ENCODE measurements at regions of chr4 and their contacts with region 1.

Region 1: GRCh38 chr4:127732613-127733328 is 2.6 kb downstream of the SLC25A31 start:
- DNase-seq: peak; percentile 15
- H3K4me3 ChIP-seq: peak overlapping the region; percentile 11; the same call in 1 of the 2 replicates
- H3K27ac ChIP-seq: no peak overlapping the region
- H3K27me3 ChIP-seq: no peaks in the 10 kb centered on the region
- CTCF ChIP-seq: peak; percentile 63

Region 2: GRCh38 chr4:127400276-127400675 is 332.5 kb before region 1 on chr4:
- CTCF ChIA-PET with region 1: no interaction called
- POLR2A ChIA-PET with region 1: no interaction called
- DNase-seq: no peak
- H3K4me3 ChIP-seq: no peak overlapping the region
- H3K27ac ChIP-seq: no peak overlapping the region
- H3K27me3 ChIP-seq: no peaks in the 10 kb centered on the region
- CTCF ChIP-seq: no peak

Region 3: GRCh38 chr4:127586922-127587571 is 145.7 kb before region 1 on chr4:
- CTCF ChIA-PET with region 1: interaction called, 18 read pairs
- POLR2A ChIA-PET with region 1: no interaction called
- DNase-seq: no peak
- H3K4me3 ChIP-seq: no peak overlapping the region
- H3K27ac ChIP-seq: no peak overlapping the region
- H3K27me3 ChIP-seq: no peaks in the 10 kb centered on the region
- CTCF ChIP-seq: peak; percentile 84

Region 4: GRCh38 chr4:127616898-127617297 is 115.9 kb before region 1 on chr4:
- CTCF ChIA-PET with region 1: interaction called, 39 read pairs
- POLR2A ChIA-PET with region 1: no interaction called
- DNase-seq: no peak
- H3K4me3 ChIP-seq: no peak overlapping the region
- H3K27ac ChIP-seq: no peak overlapping the region
- H3K27me3 ChIP-seq: peaks cover 8% of the 10 kb centered on the region
- CTCF ChIP-seq: no peak

Region 5: DNA sequence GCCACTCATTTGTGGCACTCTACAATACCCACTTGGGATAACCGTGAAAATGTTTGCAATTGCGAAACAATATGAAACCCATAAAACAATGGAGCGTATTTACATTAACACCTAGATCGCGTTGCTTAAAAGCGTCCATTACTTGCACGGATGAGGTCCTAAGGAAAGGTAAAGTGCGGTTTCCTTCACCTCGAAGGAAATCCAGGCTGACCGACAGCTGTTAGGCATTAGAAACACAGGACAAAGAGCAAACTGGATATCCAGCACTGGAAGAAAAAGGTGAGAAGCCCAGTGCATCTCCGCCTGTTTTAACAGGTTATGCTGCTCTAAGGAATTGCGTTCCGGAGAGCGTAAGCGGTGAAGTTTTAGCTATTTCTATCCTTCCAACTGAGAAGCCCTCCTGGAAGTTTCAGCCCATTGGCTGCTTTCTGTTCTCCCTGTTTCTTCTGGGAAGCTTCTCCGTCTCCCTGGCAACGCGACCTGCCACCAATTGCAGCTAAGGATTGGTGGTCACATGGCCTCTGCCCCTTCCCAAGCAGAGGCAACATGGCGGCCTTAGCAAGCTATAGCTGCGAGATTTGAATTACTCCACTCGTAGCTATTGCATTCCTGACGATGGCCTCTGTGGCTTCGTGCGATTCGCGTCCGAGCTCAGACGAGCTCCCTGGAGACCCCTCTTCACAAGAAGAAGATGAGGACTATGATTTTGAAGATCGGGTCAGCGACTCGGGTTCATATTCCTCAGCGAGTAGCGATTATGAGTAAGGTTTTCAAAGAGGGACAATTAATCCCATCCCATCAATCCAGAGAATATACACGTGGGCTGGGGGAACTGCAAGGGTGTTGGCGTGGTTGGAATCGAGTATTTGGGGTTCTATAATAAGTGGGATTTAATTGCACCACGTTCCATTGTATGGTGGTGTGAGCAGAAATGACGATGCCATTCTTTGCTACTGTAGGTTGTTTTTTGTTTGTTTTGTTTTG is 100.1 kb before region 1 on chr4 and contains the start of gene INTU:
- CTCF ChIA-PET with region 1: interaction called, 13 read pairs
- POLR2A ChIA-PET with region 1: interaction called, 3 read pairs
- DNase-seq: peak; percentile 92
- H3K4me3 ChIP-seq: peak within 1 kb of the TSS; percentile 78
- H3K27ac ChIP-seq: peak within 1 kb of the TSS; percentile 71
- H3K27me3 ChIP-seq: no peaks in the 10 kb centered on the region
- CTCF ChIP-seq: no peak
- polyA plus RNA-seq, gene INTU: 7.8 and 11.1 TPM in 2 replicates

Region 6: DNA sequence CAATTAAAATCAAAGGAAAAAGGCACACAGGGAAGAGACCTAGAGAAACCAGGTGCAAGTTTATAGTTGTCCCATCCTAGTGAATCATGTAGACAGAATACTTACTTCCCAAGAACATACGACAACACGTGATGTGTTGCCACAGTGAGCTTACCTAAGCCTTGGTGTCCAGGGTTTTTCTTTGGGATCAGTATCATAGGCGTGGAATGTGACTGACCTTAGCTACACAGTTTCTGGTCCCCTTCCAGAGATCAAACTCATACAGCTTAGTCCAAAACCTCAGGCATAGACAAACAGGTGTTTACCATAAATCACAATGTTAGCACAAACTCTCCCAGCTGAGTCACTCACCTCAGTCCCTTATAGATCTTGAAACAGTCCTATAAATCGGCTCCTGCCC is 15.1 kb after region 1 on chr4:
- CTCF ChIA-PET with region 1: interaction called, 15 read pairs
- POLR2A ChIA-PET with region 1: no interaction called
- DNase-seq: no peak
- H3K4me3 ChIP-seq: no peak overlapping the region
- H3K27ac ChIP-seq: no peak overlapping the region
- H3K27me3 ChIP-seq: no peaks in the 10 kb centered on the region
- CTCF ChIP-seq: no peak

Region 7: DNA sequence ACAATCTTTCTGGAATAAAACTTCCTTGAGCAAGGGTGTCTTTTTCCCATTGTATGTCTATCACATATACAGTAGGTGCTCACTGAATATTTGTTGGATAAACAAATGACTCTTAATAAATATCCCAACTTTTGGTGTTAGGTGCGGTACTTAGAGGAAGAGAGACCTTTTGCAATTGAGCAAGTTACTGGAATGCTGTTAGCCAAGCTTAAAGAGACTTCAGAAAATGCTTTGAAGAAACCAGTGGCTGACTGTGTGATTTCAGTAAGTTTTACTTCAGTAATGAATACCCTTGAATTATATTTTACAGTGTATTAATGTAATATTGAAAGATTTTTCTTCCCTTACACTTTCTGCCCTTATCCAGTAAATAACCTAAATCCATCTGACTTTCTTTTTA is 65.7 kb after region 1 on chr4:
- CTCF ChIA-PET with region 1: no interaction called
- POLR2A ChIA-PET with region 1: no interaction called
- DNase-seq: no peak
- H3K4me3 ChIP-seq: no peak overlapping the region
- H3K27ac ChIP-seq: no peak overlapping the region
- H3K27me3 ChIP-seq: no peaks in the 10 kb centered on the region
- CTCF ChIP-seq: no peak